ENCODE measurements at regions of chr4 and their contacts with region 1.

Region 1: GRCh38 chr4:106149911-106150310 is 166.1 kb downstream of the TBCK start:
- DNase-seq: no peak
- ATAC-seq: no peak
- H3K4me3 ChIP-seq: no peak overlapping the region
- H3K27ac ChIP-seq: no peak overlapping the region
- H3K4me1 ChIP-seq: no peaks in the 10 kb centered on the region
- H3K27me3 ChIP-seq: no peaks in the 10 kb centered on the region
- CTCF ChIP-seq: no peak
- EP300 ChIP-seq: no peak
- POLR2A ChIP-seq: no peak
- RAD21 ChIP-seq: no peak

Region 2: GRCh38 chr4:105902550-105903262 is 247.2 kb before region 1 on chr4:
- CTCF ChIA-PET with region 1: no interaction called
- POLR2A ChIA-PET with region 1: no interaction called
- in situ Hi-C with region 1: no loop called
- intact Hi-C with region 1: no loop called
- DNase-seq: no peak
- ATAC-seq: no peak
- H3K4me3 ChIP-seq: no peak overlapping the region
- H3K27ac ChIP-seq: no peak overlapping the region
- H3K4me1 ChIP-seq: peaks cover 18% of the 10 kb centered on the region
- H3K27me3 ChIP-seq: no peaks in the 10 kb centered on the region
- CTCF ChIP-seq: no peak
- EP300 ChIP-seq: no peak
- POLR2A ChIP-seq: no peak
- RAD21 ChIP-seq: no peak

Region 3: GRCh38 chr4:107619731-107620130 is 1469.8 kb after region 1 on chr4:
- CTCF ChIA-PET with region 1: no interaction called
- POLR2A ChIA-PET with region 1: no interaction called
- in situ Hi-C with region 1: no loop called
- intact Hi-C with region 1: loop called (anchors 10 kb)
- DNase-seq: no peak
- ATAC-seq: no peak
- H3K4me3 ChIP-seq: no peak overlapping the region
- H3K27ac ChIP-seq: no peak overlapping the region
- H3K4me1 ChIP-seq: peaks cover 12% of the 10 kb centered on the region
- H3K27me3 ChIP-seq: no peaks in the 10 kb centered on the region
- CTCF ChIP-seq: no peak
- EP300 ChIP-seq: no peak
- POLR2A ChIP-seq: no peak
- RAD21 ChIP-seq: no peak

Measured in HepG2 (cell line).